ACHN (cell line): ENCODE measurements at regions of chr7 and their contacts with region 1.

Region 1: GRCh38 chr7:44847508-44847920 is 373 bp downstream of the H2AZ2 start:
- DNase-seq: peak; percentile 90

Region 2: GRCh38 chr7:44565097-44565794 is 282.3 kb before region 1 on chr7:
- in situ Hi-C with region 1: no loop called
- DNase-seq: peak; percentile 72

Region 3: GRCh38 chr7:44581879-44582603 is 265.5 kb before region 1 on chr7 and contains the start of gene TMED4:
- in situ Hi-C with region 1: loop called (anchors 25 kb)
- DNase-seq: peak; percentile 99